ENCODE measurements at regions of chr6 and their contacts with region 1.

Region 1: GRCh38 chr6:139392794-139393193 is 18.3 kb upstream of the CITED2 start:
- DNase-seq: no peak

Region 2: DNA sequence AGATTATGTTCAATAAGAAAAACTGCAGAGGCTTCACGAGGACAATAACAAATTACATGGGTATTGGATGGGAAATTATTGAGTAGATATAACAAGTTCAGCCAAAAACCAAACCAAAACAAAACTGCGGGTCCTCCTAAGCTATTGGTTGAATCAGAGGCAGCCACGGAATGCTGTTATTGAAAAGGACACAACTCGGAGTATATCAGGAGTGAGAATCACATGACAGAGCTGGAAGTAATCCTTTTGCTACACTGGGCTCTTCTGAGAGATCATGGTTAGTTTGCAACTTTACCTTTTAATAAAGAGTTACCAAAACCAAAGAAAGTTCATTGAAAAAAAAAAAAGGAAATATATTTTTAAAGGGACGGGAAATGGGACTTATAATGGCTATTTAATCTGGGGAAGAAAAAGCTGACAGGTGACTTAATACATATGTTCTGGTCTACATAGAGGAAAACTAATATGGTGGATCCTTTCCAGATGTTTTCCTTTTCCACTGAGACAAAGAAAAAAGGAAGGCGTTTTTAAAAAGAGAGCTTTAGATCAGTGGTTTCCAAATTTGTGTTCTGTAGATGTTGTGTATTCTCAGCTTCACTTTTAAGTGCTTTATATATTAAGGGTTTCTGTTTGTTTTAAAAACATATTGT is 11.5 kb before region 1 on chr6:
- CTCF ChIA-PET with region 1: interaction called, 10 read pairs
- POLR2A ChIA-PET with region 1: interaction called, 4 read pairs
- DNase-seq: no peak

Region 3: GRCh38 chr6:139407718-139408222 is 15.0 kb after region 1 on chr6:
- CTCF ChIA-PET with region 1: no interaction called
- POLR2A ChIA-PET with region 1: no interaction called
- DNase-seq: no peak

Region 4: DNA sequence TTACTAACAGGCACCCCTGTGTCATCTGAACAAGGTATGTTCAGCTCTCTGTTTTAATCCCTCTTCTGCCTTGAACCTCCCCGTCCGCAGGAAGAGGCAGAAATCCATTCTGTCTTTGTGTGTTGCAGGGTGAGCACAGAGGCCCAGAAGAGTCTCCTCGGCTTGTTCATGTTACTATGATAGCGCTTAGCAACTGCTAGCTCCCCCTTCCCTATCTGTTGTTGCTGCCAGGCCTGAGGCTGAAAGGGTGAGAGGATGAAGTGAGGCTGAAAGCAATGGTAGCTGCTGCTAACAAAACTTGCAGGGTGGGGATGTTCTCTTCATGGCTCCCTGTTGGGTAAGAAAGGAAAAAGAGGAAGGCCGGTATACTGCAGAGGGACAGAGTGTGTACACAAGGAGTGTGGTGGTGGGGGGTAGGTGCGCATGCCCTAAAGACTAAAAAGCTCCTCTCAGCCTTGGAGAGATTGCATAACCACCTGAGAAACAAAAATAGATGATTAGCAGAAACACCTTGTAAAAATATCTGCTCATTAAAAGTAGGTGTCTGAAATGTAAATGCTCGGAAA is 36.9 kb after region 1 on chr6:
- CTCF ChIA-PET with region 1: no interaction called
- POLR2A ChIA-PET with region 1: no interaction called
- DNase-seq: no peak